Activated naive CD4-positive, alpha-beta T cell treated with anti-CD3 and anti-CD28 coated beads for 36 hours (primary cell): ENCODE measurements at regions of chr10 and their contacts with region 1.

Region 1: GRCh38 chr10:99620713-99621453 is 644 bp upstream of the SLC25A28 start:
- DNase-seq: peak; percentile 92
- H3K4me3 Mint-ChIP-seq: peak overlapping the region; percentile 84
- H3K27ac Mint-ChIP-seq: peak overlapping the region; percentile 93
- H3K4me1 Mint-ChIP-seq: peaks cover 40% of the 10 kb centered on the region
- H3K27me3 Mint-ChIP-seq: no peaks in the 10 kb centered on the region

Region 2: DNA sequence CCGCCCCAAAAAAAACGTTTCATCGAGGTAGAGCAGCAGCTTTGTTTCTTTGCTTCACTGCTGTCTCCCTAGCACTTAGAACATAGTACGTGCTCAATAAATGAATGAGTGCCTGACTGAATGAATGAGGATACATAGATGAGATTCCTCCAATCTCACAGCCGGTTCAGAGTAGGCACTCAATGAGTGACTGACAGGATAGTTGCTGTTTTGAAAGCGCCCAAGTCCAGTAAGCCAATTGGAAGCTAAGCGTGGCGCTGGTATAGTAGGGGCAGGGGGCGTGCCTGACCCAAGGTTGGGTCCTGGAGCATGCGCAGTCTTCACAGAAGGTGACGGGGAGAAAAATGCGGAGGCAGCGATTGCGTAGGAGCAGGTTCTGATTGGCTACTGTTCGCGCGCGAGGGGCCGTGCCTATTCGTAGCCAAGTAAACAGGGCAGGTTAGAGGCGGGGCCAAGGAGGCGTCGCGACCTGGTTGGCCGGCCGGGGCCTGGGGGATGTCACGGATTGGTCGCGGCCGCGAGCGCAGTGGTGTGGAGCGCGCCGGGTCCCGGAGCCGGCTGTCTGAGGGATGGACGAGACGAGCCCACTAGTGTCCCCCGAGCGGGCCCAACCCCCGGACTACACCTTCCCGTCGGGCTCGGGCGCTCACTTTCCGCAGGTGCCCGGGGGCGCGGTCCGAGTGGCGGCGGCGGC is 1980.6 kb before region 1 on chr10 and contains the start of gene PI4K2A:
- CTCF ChIA-PET with region 1: no interaction called
- intact Hi-C with region 1: loop called (anchors 5 kb)
- DNase-seq: peak; percentile 100
- H3K4me3 Mint-ChIP-seq: peak within 1 kb of the TSS; percentile 93
- H3K27ac Mint-ChIP-seq: peak within 1 kb of the TSS; percentile 73
- H3K4me1 Mint-ChIP-seq: peaks cover 18% of the 10 kb centered on the region
- H3K27me3 Mint-ChIP-seq: no peaks in the 10 kb centered on the region
- total RNA-seq, gene PI4K2A: 8.9 to 9.4 TPM

Region 3: DNA sequence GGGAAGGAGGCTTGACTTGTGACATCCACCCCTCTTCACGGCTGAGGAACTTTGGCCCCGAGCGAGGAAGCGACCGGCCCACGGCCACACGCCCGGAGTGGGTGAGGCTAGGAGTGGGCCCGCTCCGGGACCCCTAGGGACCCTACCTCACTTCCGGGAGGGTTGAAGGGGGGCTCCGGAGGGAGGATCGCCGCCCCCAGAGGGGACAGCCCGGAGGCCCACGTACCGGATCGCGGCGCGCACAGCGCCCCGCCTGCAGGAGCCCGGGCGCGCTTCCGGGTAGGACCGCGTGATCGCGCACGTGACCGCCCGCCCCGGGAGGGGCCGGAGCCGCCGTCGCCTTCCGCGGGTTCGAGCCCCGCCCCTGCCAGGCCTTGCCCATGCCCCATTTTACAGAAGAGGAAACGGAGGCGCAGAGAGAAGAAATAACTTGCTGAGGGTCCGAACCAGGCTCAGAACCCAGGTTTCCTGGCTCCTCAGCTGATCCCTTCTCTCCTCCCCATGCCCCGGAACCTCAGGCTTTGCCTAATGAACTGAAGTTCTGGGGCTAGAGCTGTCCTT is 1174.1 kb before region 1 on chr10 and contains the start of gene HPS1:
- CTCF ChIA-PET with region 1: no interaction called
- intact Hi-C with region 1: loop called (anchors 10 kb)
- DNase-seq: peak; percentile 86
- H3K4me3 Mint-ChIP-seq: peak within 1 kb of the TSS; percentile 88
- H3K27ac Mint-ChIP-seq: peak within 1 kb of the TSS; percentile 84
- H3K4me1 Mint-ChIP-seq: peaks cover 40% of the 10 kb centered on the region
- H3K27me3 Mint-ChIP-seq: peaks cover 3% of the 10 kb centered on the region
- total RNA-seq, gene HPS1: 28.1 to 31.0 TPM

Region 4: GRCh38 chr10:99659031-99659867 is 38.4 kb after region 1 on chr10 and contains the start of gene ENTPD7:
- CTCF ChIA-PET with region 1: interaction called, 9 read pairs
- intact Hi-C with region 1: loop called (anchors 1 kb)
- DNase-seq: peak; percentile 94
- H3K4me3 Mint-ChIP-seq: peak within 1 kb of the TSS; percentile 95
- H3K27ac Mint-ChIP-seq: peak within 1 kb of the TSS; percentile 83
- H3K4me1 Mint-ChIP-seq: peaks cover 21% of the 10 kb centered on the region
- H3K27me3 Mint-ChIP-seq: peaks cover 13% of the 10 kb centered on the region
- total RNA-seq, gene ENTPD7: 1.2 to 1.4 TPM

Region 5: GRCh38 chr10:99732033-99732912 is 111.4 kb after region 1 on chr10 and contains the starts of genes COX15 and CUTC:
- CTCF ChIA-PET with region 1: interaction called, 3 read pairs
- intact Hi-C with region 1: loop called (anchors 1 kb)
- DNase-seq: peak; percentile 96
- H3K4me3 Mint-ChIP-seq: peak within 1 kb of the TSS; percentile 99
- H3K27ac Mint-ChIP-seq: peak within 1 kb of the TSS; percentile 96
- H3K4me1 Mint-ChIP-seq: peaks cover 32% of the 10 kb centered on the region
- H3K27me3 Mint-ChIP-seq: no peaks in the 10 kb centered on the region
- total RNA-seq, gene COX15: 36.3 to 38.8 TPM
- total RNA-seq, gene CUTC: 21.6 to 21.9 TPM

Region 6: GRCh38 chr10:100174699-100175677 is 554.1 kb after region 1 on chr10:
- CTCF ChIA-PET with region 1: no interaction called
- intact Hi-C with region 1: loop called (anchors 5 kb)
- DNase-seq: peak; percentile 32
- H3K4me3 Mint-ChIP-seq: no peak overlapping the region
- H3K27ac Mint-ChIP-seq: peak overlapping the region; percentile 72
- H3K4me1 Mint-ChIP-seq: peaks cover 48% of the 10 kb centered on the region
- H3K27me3 Mint-ChIP-seq: no peaks in the 10 kb centered on the region

Region 7: GRCh38 chr10:100229819-100230422 is 609.0 kb after region 1 on chr10:
- CTCF ChIA-PET with region 1: no interaction called
- intact Hi-C with region 1: loop called (anchors 1 kb)
- DNase-seq: no peak
- H3K4me3 Mint-ChIP-seq: peak overlapping the region; percentile 91
- H3K27ac Mint-ChIP-seq: peak overlapping the region; percentile 90
- H3K4me1 Mint-ChIP-seq: peaks cover 31% of the 10 kb centered on the region
- H3K27me3 Mint-ChIP-seq: no peaks in the 10 kb centered on the region

Region 8: DNA sequence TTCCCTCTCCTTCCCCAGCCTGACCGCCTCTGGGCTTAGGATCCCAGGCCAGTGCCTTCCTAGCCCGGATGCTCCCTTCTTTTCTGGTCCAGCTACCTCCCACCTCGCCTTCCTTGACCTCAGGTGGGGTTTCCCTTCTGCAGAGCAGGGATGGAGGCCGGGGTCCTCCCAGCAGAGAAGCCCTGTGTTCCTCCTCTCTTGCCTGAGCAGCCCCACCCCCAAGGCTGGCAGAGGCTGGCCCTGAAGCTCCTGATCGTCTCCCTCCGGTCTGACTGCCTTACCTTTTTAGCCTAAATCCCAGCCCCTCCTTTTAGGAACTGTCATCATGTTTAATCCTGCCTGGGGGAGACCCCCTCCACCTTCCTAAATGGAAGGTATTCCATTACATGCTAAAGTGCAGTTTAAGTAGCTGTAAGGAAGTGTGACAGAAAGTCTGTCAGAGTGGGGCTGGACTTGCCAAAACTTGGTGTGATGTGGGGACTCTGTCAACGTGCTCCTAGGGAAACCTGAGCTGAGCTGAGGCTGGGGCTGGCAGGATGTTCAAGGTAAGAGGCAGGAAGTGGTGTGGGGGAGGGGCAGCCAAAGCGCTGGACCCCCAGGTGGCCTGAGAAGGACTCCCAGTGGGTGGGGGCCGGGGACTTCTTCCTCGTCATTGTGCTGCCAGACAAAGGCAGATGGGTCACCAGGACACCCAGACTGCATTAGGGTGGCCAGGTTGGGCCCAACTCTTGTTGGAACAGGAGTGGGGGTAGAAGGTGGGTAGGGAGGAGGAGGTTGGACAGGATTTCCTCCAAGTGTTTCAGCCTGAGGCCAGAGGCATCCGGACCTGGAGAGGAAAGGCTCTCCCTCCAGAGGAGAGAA is 1568.9 kb after region 1 on chr10:
- CTCF ChIA-PET with region 1: no interaction called
- intact Hi-C with region 1: no loop called
- DNase-seq: no peak
- H3K4me3 Mint-ChIP-seq: no peak overlapping the region
- H3K27ac Mint-ChIP-seq: no peak overlapping the region
- H3K4me1 Mint-ChIP-seq: peaks cover 5% of the 10 kb centered on the region
- H3K27me3 Mint-ChIP-seq: peaks cover 3% of the 10 kb centered on the region